ENCODE measurements at regions of chr5 and their contacts with region 1.

Region 1: GRCh38 chr5:119411935-119412602 is 40.2 kb upstream of the HSD17B4 start:
- DNase-seq: peak; percentile 52
- H3K4me3 ChIP-seq: peak overlapping the region; percentile 60
- H3K27ac ChIP-seq: peak overlapping the region; percentile 71
- H3K27me3 ChIP-seq: no peaks in the 10 kb centered on the region
- CTCF ChIP-seq: peak; percentile 94

Region 2: GRCh38 chr5:119049824-119050449 is 362.1 kb before region 1 on chr5:
- CTCF ChIA-PET with region 1: interaction called, 13 read pairs
- POLR2A ChIA-PET with region 1: no interaction called
- DNase-seq: no peak
- H3K4me3 ChIP-seq: no peak overlapping the region
- H3K27ac ChIP-seq: peak overlapping the region; percentile 61
- H3K27me3 ChIP-seq: no peaks in the 10 kb centered on the region
- CTCF ChIP-seq: no peak

Region 3: DNA sequence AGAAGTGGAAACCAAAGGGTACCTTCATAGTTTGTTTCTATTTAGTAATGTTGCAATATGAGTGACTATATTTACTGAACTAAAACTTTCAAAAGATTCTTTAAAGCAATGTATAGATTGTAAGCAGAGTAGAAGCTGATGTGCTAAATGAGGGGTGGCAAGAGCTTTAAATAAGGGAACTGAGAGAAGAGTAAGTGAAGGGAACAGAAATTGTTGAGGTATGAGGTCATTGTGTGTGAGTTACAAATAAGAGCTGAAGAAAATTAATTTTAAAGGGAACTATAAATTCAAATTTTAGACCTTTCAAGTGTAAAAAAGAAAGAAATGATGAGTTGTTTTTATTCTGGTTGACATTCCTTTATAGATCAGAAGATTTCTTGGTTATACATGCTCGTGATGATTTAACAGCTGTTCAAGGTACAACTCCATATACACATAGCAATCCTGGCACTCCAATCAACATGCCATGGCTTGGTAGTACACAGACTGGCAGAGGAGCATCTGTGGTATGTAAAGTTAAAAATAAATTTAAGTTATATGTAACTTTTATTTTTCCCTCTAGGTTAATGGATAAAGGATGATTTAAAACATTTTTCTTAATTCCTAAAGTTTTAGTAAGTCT is 191.4 kb before region 1 on chr5:
- CTCF ChIA-PET with region 1: interaction called, 23 read pairs
- POLR2A ChIA-PET with region 1: no interaction called
- DNase-seq: no peak
- H3K4me3 ChIP-seq: no peak overlapping the region
- H3K27ac ChIP-seq: no peak overlapping the region
- H3K27me3 ChIP-seq: no peaks in the 10 kb centered on the region
- CTCF ChIP-seq: no peak

Region 4: GRCh38 chr5:119290161-119290569 is 121.9 kb before region 1 on chr5:
- CTCF ChIA-PET with region 1: interaction called, 17 read pairs
- POLR2A ChIA-PET with region 1: no interaction called
- DNase-seq: no peak
- H3K4me3 ChIP-seq: no peak overlapping the region
- H3K27ac ChIP-seq: no peak overlapping the region
- H3K27me3 ChIP-seq: no peaks in the 10 kb centered on the region
- CTCF ChIP-seq: no peak

Region 5: GRCh38 chr5:119355685-119356611 is 56.1 kb before region 1 on chr5 and contains the start of gene TNFAIP8:
- CTCF ChIA-PET with region 1: interaction called, 23 read pairs
- POLR2A ChIA-PET with region 1: no interaction called
- DNase-seq: no peak
- H3K4me3 ChIP-seq: peak within 1 kb of the TSS; percentile 82
- H3K27ac ChIP-seq: peak within 1 kb of the TSS; percentile 83
- H3K27me3 ChIP-seq: no peaks in the 10 kb centered on the region
- CTCF ChIP-seq: no peak
- polyA plus RNA-seq, gene TNFAIP8: 48.3 and 56.4 TPM in 2 replicates

Measured in AG04450 (cell line).